H1 (cell line): ENCODE measurements at regions of chr16 and their contacts with region 1.

Region 1: DNA sequence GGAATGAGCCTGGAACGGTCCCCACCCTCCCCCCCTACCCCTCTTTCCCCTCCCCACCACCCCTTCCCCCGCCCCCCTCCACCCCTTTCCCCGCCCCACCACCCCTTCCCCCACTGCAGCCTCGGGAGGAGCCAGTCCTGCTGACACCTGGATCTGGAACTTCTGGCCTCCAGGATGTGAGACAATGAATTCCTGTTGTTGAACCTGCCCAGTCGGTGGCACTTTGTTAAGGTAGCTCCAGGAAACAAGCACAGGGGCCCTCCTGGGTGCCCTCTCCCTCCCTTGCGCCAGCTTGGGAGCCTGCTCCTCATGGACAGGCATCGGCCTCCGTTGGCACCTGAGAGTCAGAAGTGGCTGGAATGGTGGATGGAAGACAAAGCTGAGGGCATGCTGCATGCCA is 152.4 kb upstream of the FOXF1 start:
- DNase-seq: no peak
- H3K4me3 ChIP-seq: no peak overlapping the region
- H3K27ac ChIP-seq: no peak overlapping the region
- H3K4me1 ChIP-seq: peaks cover 0 to 18% (median 4%) of the 10 kb centered on the region in 4 experiments; a peak in 3 of 7 replicates
- H3K27me3 ChIP-seq: no peaks in the 10 kb centered on the region
- CTCF ChIP-seq: no peak
- EP300 ChIP-seq: no peak
- POLR2A ChIP-seq: no peak
- RAD21 ChIP-seq: no peak

Region 2: GRCh38 chr16:86343027-86343787 is 14.7 kb before region 1 on chr16:
- CTCF ChIA-PET with region 1: interaction called, 12 read pairs
- POLR2A ChIA-PET with region 1: interaction called, 3 read pairs
- DNase-seq: no peak
- H3K4me3 ChIP-seq: no peak overlapping the region
- H3K27ac ChIP-seq: no peak overlapping the region
- H3K4me1 ChIP-seq: peaks cover 2 to 13% (median 8%) of the 10 kb centered on the region in 4 experiments; a peak in 5 of 7 replicates
- H3K27me3 ChIP-seq: peaks cover 0 to 11% (median 3%) of the 10 kb centered on the region in 4 experiments; a peak in 4 of 7 replicates
- CTCF ChIP-seq: no peak
- EP300 ChIP-seq: no peak
- POLR2A ChIP-seq: no peak
- RAD21 ChIP-seq: no peak

Region 3: DNA sequence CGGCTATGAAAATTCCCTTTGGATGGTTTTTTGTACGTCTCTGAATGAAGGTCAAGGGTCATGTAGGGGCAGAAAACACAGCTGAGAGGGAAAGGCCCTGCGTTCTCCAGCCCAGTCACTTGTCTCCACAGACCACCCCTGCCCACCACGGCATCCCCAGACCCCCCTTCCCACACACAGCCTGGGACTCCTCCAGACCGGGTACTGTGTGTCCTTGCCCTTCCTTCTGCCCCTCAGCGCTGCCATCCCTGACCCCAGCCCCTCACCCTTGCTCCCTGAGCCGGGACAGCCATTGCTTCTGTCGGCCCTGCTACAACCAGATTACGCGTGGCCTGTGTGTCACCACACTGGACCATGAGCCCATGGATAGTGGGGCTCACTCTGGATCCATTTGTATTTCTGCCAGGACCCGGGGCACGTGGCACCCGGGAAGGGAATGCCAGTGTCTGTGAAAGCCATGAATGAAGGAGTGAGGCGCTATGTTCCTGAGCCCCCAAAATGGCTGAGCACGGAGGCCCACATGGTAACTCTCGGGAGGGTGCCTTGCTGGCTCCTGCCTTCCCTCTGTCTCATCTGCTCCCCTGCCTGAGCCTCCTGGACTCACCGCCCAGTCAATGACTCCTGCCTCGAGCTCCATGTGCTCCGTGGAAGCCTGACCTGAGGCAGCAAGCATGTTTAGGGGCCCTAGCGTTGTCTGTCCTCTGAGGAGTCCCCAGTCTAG is 13.3 kb after region 1 on chr16:
- CTCF ChIA-PET with region 1: no interaction called
- POLR2A ChIA-PET with region 1: no interaction called
- DNase-seq: no peak
- H3K4me3 ChIP-seq: no peak overlapping the region
- H3K27ac ChIP-seq: no peak overlapping the region
- H3K4me1 ChIP-seq: peaks cover 4 to 21% (median 5%) of the 10 kb centered on the region in 4 experiments
- H3K27me3 ChIP-seq: no peaks in the 10 kb centered on the region
- CTCF ChIP-seq: no peak
- EP300 ChIP-seq: no peak
- POLR2A ChIP-seq: no peak
- RAD21 ChIP-seq: no peak